GM10248 (cell line): ENCODE measurements at regions of chr6 and their contacts with region 1.

Region 1: DNA sequence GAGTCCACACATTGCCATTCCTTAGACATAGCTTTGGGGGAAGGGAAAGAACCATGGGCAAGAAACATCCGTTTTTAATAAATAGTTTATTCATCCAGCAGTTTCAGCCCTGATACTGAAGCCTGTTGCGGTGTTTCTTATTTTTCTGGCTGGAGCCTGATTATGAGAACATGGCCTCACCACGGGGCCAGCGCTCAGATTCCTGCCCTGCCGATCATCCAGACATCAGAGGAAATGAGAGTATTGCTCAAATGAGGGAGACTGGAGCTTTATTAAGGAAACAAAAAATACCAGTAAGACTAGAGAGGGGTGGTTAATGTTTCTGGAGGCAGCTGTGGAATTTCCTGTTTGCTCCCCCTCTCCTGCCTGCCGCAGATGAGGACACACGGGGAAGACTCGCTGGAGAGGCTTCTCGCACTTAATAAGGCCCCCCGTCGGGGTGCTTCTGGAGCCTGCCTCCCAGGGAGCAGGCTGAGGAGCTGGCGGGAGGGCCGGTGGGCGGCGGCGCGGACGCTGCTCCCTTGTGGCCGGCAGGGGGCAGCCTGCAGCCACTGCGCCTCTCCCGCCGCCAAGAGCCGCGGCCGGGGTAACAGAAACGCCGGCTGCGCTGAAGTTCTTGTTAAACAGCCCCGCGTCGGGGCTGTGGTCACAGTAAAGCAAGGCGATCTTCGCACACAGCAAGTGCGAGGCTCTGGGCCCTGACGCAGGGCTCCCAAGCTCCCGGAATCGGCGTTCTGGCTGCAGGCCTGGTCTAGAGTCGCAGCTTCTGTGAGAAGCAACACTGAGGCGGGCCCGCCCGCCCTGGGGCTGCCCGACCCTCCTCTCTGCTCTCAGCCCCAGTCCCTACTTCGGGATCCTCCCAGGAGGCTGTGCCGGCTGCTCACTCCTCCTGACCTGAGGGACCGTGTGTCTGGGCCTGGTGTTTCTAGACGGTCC is 17.5 kb downstream of the LEMD2 start:
- DNase-seq: peak; percentile 86
- CTCF ChIP-seq: peak; percentile 91

Region 2: DNA sequence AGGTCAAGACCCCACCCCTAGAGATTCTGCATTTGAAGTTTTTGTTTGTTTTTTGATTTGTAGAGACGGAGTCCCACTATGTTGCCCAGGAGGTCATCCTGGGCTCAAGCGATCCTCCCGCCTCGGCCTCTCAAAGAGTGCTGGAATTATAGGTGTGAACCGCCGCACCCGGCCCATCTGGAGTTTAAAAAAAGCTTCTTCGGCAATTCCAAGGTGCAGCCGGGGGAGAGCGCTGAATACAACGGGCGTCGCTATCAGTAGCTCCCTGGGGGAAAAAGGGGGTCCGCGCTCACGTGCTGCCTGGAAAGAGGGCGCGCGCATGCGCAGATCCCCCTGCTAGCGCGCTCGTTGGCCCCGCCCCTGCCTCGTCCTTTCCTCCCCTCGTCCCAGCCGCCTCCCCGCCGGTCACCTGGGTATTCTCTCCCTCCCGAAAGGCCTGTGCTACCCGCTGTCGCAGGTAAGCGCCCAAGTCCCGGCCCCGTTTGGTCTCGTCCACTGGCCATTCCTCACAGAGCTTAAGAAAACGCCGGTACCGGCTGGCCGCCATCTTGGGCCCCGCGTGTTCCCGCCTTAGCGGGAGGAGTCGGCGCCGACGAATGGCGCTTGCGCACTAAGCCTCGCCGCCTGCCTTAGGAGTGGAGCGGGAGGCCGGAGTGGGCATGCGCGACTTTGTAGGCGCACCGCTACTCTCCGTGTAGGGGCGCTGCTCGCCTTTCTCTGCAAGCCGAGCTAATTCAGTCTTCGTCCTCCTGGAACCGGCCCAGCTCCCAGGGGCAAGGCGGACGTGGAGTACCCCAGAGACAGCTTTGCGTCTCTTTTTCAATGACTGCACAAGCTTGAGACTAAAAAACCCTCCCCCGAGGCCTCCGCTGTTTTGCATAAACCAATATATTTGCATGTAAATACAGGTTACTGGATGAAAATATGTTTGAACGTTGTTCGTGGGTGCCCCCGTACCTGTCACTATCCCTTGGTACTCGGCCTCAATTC is 60.0 kb before region 1 on chr6 and contains the start of gene UQCC2:
- CTCF ChIA-PET with region 1: interaction called, 13 read pairs
- POLR2A ChIA-PET with region 1: no interaction called
- DNase-seq: peak; percentile 98
- CTCF ChIP-seq: peak; percentile 66

Region 3: GRCh38 chr6:33788694-33789549 is 17.5 kb after region 1 on chr6 and contains the start of gene LEMD2:
- CTCF ChIA-PET with region 1: interaction called, 18 read pairs
- POLR2A ChIA-PET with region 1: interaction called, 3 read pairs
- DNase-seq: peak; percentile 97
- CTCF ChIP-seq: no peak

Region 4: GRCh38 chr6:34027445-34027936 is 256.1 kb after region 1 on chr6:
- CTCF ChIA-PET with region 1: interaction called, 80 read pairs
- POLR2A ChIA-PET with region 1: no interaction called
- DNase-seq: peak; percentile 79
- CTCF ChIP-seq: peak; percentile 64

Region 5: DNA sequence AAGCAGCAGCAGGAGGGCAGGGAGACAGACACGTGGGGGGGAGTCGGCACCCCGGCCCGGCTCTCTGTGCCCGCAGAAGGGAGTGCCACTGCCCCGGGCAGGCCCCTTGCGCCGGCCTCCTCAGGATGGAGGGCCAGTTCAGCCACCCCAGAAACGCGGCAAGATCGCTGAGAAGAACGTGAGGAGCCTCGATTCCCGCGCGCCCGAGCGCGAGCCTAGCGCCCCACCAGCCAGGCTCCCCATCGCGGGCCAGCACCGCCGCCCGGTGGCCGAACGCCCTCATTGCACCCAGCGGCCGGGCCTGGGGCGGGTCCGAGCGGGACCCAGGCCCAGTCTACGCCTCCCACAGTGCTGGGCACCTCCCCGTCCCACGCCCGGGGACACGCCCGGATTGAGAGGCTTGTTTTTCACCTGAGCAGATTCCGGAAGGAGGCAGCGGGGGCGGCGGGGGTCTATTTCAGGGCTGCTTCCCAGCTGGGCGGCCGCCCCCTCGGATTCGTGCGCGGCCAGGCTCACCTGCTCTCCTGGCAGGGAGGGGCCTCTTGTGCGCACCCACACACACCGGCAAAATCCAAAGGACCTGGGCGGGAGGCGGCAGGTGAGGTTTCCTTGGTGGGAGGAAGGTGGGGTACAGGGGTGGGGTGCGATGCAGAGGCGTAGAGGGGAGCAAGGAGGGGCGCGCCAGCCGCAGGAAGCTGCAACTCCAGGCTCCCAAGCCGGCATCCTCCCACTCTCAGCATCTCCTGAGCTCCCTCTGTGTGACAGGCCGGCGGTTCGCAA is 383.4 kb after region 1 on chr6:
- CTCF ChIA-PET with region 1: interaction called, 82 read pairs
- POLR2A ChIA-PET with region 1: no interaction called
- DNase-seq: peak; percentile 89
- CTCF ChIP-seq: peak; percentile 91